ENCODE measurements at regions of chr12 and their contacts with region 1.

Region 1: GRCh38 chr12:76746516-76746915 is 17.4 kb upstream of the ZDHHC17 start:
- DNase-seq: no peak
- ATAC-seq: no peak
- H3K4me3 ChIP-seq: no peak overlapping the region
- H3K27ac ChIP-seq: no peak overlapping the region
- H3K4me1 ChIP-seq: no peaks in the 10 kb centered on the region
- H3K27me3 ChIP-seq: no peaks in the 10 kb centered on the region
- CTCF ChIP-seq: no peak
- POLR2A ChIP-seq: no peak

Region 2: GRCh38 chr12:76713130-76713529 is 33.4 kb before region 1 on chr12:
- intact Hi-C with region 1: loop called in 1 of 10 experiments (anchors 5 kb)
- DNase-seq: no peak
- ATAC-seq: peak in 1 of 4 donors; percentile 39
- H3K4me3 ChIP-seq: no peak overlapping the region
- H3K27ac ChIP-seq: no peak overlapping the region
- H3K4me1 ChIP-seq: peaks cover 0 to 5% (median 0%) of the 10 kb centered on the region in 12 donors
- H3K27me3 ChIP-seq: no peaks in the 10 kb centered on the region
- CTCF ChIP-seq: peak in 3 of 12 donors; percentile 20 to 33 (median 21)
- POLR2A ChIP-seq: no peak

Measured in heart left ventricle (tissue), 16 donors.